ENCODE measurements at regions of chr1 and their contacts with region 1.

Region 1: GRCh38 chr1:179954493-179955297 is at the start of gene CEP350:
- DNase-seq: peak; percentile 99
- ATAC-seq: peak; percentile 94
- H3K4me3 Mint-ChIP-seq: peak within 1 kb of the TSS; percentile 86
- H3K27ac Mint-ChIP-seq: peak within 1 kb of the TSS; percentile 98
- H3K4me1 Mint-ChIP-seq: peaks cover 40% of the 10 kb centered on the region
- H3K27me3 Mint-ChIP-seq: no peaks in the 10 kb centered on the region
- CTCF ChIP-seq: no peak
- total RNA-seq, gene CEP350: 38.9 to 42.3 TPM

Region 2: DNA sequence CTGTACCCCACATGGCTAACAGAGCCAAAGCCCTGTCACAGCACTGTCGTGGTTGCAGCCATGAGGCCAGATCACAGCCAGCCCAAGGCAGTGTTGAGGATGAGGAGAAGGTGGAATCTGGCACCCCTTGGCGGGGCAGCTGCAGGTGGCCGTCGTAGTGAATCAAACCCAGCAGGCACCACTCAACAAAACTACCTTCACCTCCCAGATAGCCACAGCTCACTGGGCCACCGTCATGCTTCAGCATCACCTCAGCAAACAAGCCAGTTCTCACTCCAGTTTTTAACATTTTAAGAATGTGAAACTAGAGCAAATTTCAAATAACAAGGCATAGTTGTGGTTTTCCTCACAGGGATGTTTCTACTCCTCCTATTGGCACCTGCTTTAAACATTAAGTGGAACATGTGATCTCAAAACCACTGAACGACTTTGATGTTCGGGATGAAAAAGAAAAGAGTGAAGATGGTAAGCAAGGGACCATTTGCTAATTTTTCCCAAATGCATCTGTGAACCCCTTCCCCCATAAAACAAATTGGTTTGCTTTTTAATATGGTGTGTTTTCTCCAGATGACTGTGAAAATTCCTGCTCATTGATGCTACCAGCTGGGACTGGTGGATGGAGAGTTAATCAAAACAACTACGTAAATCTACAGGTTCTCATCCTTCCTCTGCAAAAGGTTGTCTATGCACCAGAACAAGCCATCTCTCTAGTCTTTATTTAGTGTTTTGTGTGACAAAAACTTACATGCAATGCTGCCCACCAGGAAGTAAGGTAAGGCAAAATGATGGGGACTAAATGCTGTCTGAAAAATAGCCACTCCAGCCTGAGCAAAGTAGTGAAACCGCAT is 122.6 kb before region 1 on chr1:
- CTCF ChIA-PET with region 1: no interaction called
- POLR2A ChIA-PET with region 1: no interaction called
- intact Hi-C with region 1: no loop called
- DNase-seq: peak; percentile 20
- ATAC-seq: peak; percentile 58
- H3K4me3 Mint-ChIP-seq: no peak overlapping the region
- H3K27ac Mint-ChIP-seq: peak overlapping the region; percentile 11
- H3K4me1 Mint-ChIP-seq: peaks cover 24% of the 10 kb centered on the region
- H3K27me3 Mint-ChIP-seq: no peaks in the 10 kb centered on the region
- CTCF ChIP-seq: no peak

Region 3: DNA sequence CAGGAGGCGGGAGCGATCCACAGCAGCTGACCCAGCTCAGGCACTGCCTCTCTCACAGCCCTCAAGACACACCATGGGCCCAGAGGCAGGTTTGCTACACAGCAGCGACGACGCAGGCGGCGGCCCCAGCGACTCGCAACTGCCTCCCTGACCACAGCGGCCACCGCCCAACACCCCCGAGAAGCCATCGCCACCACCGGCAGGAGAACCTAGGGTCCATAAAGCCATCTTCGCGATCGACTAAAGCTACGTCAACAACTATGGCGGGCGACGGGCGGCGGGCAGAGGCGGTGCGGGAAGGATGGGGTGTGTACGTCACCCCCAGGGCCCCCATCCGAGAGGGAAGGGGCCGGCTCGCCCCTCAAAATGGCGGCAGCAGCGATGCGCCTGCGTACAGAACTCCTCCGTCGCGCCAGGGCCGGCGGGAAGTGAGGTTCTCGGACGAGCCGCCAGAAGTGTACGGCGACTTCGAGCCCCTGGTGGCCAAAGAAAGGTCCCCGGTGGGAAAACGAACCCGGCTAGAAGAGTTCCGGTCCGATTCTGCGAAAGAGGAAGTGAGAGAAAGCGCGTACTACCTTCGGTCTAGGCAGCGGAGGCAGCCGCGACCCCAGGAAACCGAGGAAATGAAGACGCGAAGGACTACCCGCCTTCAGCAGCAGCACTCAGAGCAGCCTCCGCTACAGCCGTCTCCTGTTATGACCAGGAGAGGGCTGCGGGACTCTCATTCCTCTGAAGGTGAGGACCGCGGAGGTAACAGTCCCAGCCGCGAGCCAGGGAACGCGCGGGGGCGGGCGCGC is 72.3 kb before region 1 on chr1 and contains the start of gene TOR1AIP1:
- CTCF ChIA-PET with region 1: interaction called, 3 read pairs
- POLR2A ChIA-PET with region 1: interaction called, 15 read pairs
- intact Hi-C with region 1: loop called (anchors 1 kb)
- DNase-seq: peak; percentile 97
- ATAC-seq: peak; percentile 83
- H3K4me3 Mint-ChIP-seq: peak within 1 kb of the TSS; percentile 89
- H3K27ac Mint-ChIP-seq: peak within 1 kb of the TSS; percentile 99
- H3K4me1 Mint-ChIP-seq: peaks cover 49% of the 10 kb centered on the region
- H3K27me3 Mint-ChIP-seq: no peaks in the 10 kb centered on the region
- CTCF ChIP-seq: peak; percentile 36
- total RNA-seq, gene TOR1AIP1: 38.3 to 45.8 TPM

Region 4: GRCh38 chr1:179966551-179966950 is 11.9 kb after region 1 on chr1:
- CTCF ChIA-PET with region 1: interaction called, 10 read pairs
- POLR2A ChIA-PET with region 1: interaction called, 9 read pairs
- intact Hi-C with region 1: no loop called
- DNase-seq: no peak
- ATAC-seq: no peak
- H3K4me3 Mint-ChIP-seq: no peak overlapping the region
- H3K27ac Mint-ChIP-seq: no peak overlapping the region
- H3K4me1 Mint-ChIP-seq: peaks cover 61% of the 10 kb centered on the region
- H3K27me3 Mint-ChIP-seq: no peaks in the 10 kb centered on the region
- CTCF ChIP-seq: no peak

Region 5: DNA sequence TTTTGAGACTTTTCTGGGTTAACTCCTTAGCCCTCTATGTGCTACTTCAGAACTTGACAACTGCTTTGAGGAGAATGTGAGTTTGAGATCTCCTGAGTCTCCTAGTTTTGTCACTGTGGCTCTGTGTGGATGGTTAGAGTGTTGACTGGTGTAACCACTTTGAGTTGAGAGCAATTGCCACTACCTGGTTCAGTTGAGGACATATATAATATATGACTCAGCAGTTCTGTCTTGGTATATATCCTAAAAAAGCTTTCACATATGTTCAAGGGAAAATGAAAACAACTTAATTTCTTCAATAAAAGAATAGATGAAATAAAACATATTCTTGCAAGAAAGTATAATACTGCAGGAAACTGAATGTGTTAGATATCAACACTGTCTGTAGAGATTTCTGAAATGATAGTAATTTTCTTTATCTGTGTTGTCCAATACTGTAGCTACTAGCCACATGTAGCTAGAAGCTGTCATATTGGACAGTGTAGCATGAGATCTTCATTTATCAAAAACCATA is 103.2 kb after region 1 on chr1:
- CTCF ChIA-PET with region 1: no interaction called
- POLR2A ChIA-PET with region 1: no interaction called
- intact Hi-C with region 1: no loop called
- DNase-seq: no peak
- ATAC-seq: peak; percentile 30
- H3K4me3 Mint-ChIP-seq: no peak overlapping the region
- H3K27ac Mint-ChIP-seq: no peak overlapping the region
- H3K4me1 Mint-ChIP-seq: peaks cover 3% of the 10 kb centered on the region
- H3K27me3 Mint-ChIP-seq: no peaks in the 10 kb centered on the region
- CTCF ChIP-seq: no peak

Measured in activated CD8-positive, alpha-beta T cell treated with anti-CD3 and anti-CD28 coated beads for 36 hours (primary cell).